ENCODE measurements at regions of chr20 and their contacts with region 1.

Region 1: GRCh38 chr20:45934586-45935415 is at the start of gene PCIF1:
- DNase-seq: peak; percentile 97
- ATAC-seq: peak; percentile 80
- H3K4me3 Mint-ChIP-seq: peak within 1 kb of the TSS; percentile 97
- H3K27ac Mint-ChIP-seq: peak within 1 kb of the TSS; percentile 98
- H3K4me1 Mint-ChIP-seq: peaks cover 29% of the 10 kb centered on the region
- H3K27me3 Mint-ChIP-seq: no peaks in the 10 kb centered on the region
- CTCF ChIP-seq: no peak
- total RNA-seq, gene PCIF1: 48.3 and 55.7 TPM in 2 replicates

Region 2: DNA sequence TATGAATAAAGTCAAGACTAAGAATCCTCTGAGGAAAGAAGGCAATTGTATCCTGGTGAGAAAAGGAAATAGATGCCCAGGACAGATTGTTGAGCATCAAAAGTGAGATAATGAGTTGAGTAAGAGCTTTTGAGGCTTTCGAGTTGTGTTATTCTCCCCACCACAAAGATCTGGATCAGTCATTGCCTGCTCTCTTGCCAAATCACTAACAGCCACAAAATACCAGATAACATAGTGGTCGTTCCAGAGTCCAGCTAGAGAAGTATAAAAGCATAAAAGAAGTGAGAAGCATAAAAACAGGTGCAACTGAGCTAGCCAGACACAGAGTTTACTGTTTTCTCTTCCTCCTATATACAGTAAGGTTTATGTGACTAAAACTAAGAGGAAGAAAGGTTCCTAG is 207.8 kb before region 1 on chr20:
- CTCF ChIA-PET with region 1: no interaction called
- POLR2A ChIA-PET with region 1: no interaction called
- intact Hi-C with region 1: no loop called
- DNase-seq: no peak
- ATAC-seq: no peak
- H3K4me3 Mint-ChIP-seq: no peak overlapping the region
- H3K27ac Mint-ChIP-seq: no peak overlapping the region
- H3K4me1 Mint-ChIP-seq: no peaks in the 10 kb centered on the region
- H3K27me3 Mint-ChIP-seq: peaks cover 7% of the 10 kb centered on the region
- CTCF ChIP-seq: no peak

Region 3: DNA sequence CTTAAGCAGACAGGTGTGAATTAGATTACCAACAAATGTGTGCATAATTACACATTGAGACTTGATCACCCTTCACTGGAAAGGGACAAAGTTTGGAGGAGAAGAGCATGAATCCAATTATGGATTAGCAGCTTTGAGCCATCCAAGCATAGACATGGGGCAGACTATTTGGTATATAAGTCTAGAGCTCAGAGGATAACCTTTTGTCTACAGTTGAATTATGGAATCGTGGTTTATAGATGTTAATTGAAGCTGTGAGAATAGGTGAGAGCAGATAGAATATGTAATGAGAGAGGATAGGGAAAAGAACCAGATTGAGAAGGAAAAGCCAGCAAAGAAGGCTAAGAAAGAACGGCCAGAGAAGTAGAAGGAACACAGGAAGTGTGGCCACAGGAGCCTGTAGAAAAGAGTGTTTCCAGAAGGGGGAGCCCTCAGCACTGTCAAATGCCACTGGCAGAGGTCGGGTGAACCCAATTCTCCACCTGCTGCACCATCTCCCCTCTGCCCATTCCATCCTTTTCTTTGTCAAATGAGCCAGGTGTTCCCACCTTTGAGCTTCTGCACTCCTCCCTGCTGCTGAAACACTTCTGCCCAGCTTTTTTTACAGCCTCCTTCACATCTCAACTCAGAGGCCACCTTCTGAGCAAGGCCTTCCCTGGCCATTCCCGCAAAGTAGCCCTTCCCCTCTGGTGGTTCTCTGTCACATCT is 135.7 kb before region 1 on chr20:
- CTCF ChIA-PET with region 1: interaction called, 6 read pairs
- POLR2A ChIA-PET with region 1: interaction called, 4 read pairs
- intact Hi-C with region 1: loop called (anchors 1 kb)
- DNase-seq: peak; percentile 25
- ATAC-seq: peak; percentile 95
- H3K4me3 Mint-ChIP-seq: no peak overlapping the region
- H3K27ac Mint-ChIP-seq: no peak overlapping the region
- H3K4me1 Mint-ChIP-seq: peaks cover 9% of the 10 kb centered on the region
- H3K27me3 Mint-ChIP-seq: no peaks in the 10 kb centered on the region
- CTCF ChIP-seq: no peak

Region 4: GRCh38 chr20:45857114-45857881 is 77.5 kb before region 1 on chr20 and contains the starts of genes ACOT8 and ZSWIM3:
- CTCF ChIA-PET with region 1: no interaction called
- POLR2A ChIA-PET with region 1: interaction called, 39 read pairs
- intact Hi-C with region 1: loop called (anchors 1 kb)
- DNase-seq: peak; percentile 67
- ATAC-seq: peak; percentile 98
- H3K4me3 Mint-ChIP-seq: peak within 1 kb of the TSS; percentile 94
- H3K27ac Mint-ChIP-seq: peak within 1 kb of the TSS; percentile 94
- H3K4me1 Mint-ChIP-seq: peaks cover 48% of the 10 kb centered on the region
- H3K27me3 Mint-ChIP-seq: no peaks in the 10 kb centered on the region
- CTCF ChIP-seq: no peak
- total RNA-seq, gene ACOT8: 24.5 and 27.3 TPM in 2 replicates
- total RNA-seq, gene ZSWIM3: 5.9 and 6.4 TPM in 2 replicates

Region 5: GRCh38 chr20:45890985-45891983 is 43.5 kb before region 1 on chr20 and contains the starts of genes CTSA and NEURL2:
- CTCF ChIA-PET with region 1: interaction called, 15 read pairs
- POLR2A ChIA-PET with region 1: interaction called, 84 read pairs
- intact Hi-C with region 1: loop called (anchors 1 kb)
- DNase-seq: peak; percentile 86
- ATAC-seq: peak; percentile 87
- H3K4me3 Mint-ChIP-seq: peak within 1 kb of the TSS; percentile 93
- H3K27ac Mint-ChIP-seq: peak within 1 kb of the TSS; percentile 87
- H3K4me1 Mint-ChIP-seq: peaks cover 30% of the 10 kb centered on the region
- H3K27me3 Mint-ChIP-seq: no peaks in the 10 kb centered on the region
- CTCF ChIP-seq: no peak
- total RNA-seq, gene CTSA: 61.9 and 67.2 TPM in 2 replicates
- total RNA-seq, gene NEURL2: 1.1 and 2.0 TPM in 2 replicates

Region 6: DNA sequence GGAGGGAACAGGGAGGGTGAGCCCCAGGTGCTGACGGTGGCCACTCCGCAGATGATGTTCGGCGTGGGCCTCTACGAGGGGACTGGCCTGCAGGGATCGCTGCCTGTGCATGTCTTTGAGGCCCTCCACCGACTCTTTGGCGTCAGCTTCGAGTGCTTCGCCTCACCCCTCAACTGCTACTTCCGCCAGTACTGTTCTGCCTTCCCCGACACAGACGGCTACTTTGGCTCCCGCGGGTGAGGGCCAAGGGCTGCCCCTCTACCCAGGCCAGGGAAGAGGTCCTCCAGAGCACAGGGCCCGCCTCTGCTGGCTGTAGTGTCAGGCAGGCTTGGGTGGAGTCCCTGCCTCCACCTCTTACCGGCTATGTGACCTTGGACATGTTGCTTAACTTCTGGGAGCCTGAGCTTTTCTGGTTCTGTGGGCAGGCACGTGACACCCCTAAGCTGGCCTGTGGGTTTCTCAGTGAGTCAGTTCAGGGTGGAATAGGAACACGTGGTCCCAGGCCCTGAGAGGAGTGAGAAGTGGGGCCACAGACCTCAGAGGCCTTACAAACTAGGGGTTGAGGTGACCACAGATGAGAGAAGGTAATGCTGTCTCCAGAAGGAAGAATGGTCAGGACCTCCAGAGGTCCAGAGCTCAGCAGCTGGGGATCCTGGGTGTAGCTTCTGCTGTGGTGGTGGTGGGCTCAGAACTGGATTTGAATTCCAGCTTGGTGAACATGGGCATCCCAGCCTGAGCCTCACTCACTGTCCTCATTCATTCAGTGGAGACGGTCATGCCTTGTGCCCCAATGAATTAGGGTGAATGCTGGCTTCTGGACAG is 11.6 kb after region 1 on chr20:
- CTCF ChIA-PET with region 1: no interaction called
- POLR2A ChIA-PET with region 1: interaction called, 55 read pairs
- intact Hi-C with region 1: no loop called
- DNase-seq: no peak
- ATAC-seq: peak; percentile 19
- H3K4me3 Mint-ChIP-seq: no peak overlapping the region
- H3K27ac Mint-ChIP-seq: no peak overlapping the region
- H3K4me1 Mint-ChIP-seq: peaks cover 4% of the 10 kb centered on the region
- H3K27me3 Mint-ChIP-seq: no peaks in the 10 kb centered on the region
- CTCF ChIP-seq: no peak

Region 7: GRCh38 chr20:46007671-46008070 is 72.9 kb after region 1 on chr20:
- CTCF ChIA-PET with region 1: no interaction called
- POLR2A ChIA-PET with region 1: no interaction called
- intact Hi-C with region 1: no loop called
- DNase-seq: no peak
- ATAC-seq: no peak
- H3K4me3 Mint-ChIP-seq: no peak overlapping the region
- H3K27ac Mint-ChIP-seq: peak overlapping the region; percentile 8
- H3K4me1 Mint-ChIP-seq: peaks cover 85% of the 10 kb centered on the region
- H3K27me3 Mint-ChIP-seq: peaks cover 36% of the 10 kb centered on the region
- CTCF ChIP-seq: no peak

Region 8: DNA sequence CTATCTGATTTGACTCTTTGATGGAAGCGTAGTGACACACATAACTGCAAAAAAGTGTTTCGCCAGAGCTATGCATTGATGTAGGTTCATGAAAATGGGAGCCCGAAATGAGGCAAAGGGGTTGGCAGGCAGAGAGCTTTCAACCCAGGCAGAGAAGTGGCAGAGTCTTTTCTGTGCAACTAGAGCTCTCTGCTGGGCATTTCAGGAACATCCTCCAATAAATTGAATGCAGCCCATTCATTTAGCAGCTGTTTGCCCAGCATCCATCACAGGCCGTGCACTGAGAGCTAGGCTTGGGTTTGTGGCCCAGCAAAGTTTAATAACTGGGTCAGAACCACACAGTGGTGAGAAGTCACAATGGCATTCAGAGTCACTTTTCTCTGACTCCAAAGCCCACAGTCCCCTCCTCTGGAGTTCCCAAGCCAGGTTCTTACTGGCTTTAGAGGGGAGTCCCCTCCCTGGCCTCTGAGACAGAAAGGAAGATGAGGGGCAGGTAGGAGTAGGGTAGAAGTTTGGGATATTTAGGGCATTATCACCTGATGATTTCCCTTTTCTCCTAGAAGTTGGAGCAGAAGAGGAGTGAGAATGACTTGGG is 503.5 kb after region 1 on chr20:
- CTCF ChIA-PET with region 1: no interaction called
- POLR2A ChIA-PET with region 1: no interaction called
- intact Hi-C with region 1: no loop called
- DNase-seq: no peak
- ATAC-seq: no peak
- H3K4me3 Mint-ChIP-seq: no peak overlapping the region
- H3K27ac Mint-ChIP-seq: no peak overlapping the region
- H3K4me1 Mint-ChIP-seq: no peaks in the 10 kb centered on the region
- H3K27me3 Mint-ChIP-seq: peaks cover 20% of the 10 kb centered on the region
- CTCF ChIP-seq: no peak